Adrenal gland (tissue), 19 donors: ENCODE measurements at regions of chr12 and their contacts with region 1.

Region 1: DNA sequence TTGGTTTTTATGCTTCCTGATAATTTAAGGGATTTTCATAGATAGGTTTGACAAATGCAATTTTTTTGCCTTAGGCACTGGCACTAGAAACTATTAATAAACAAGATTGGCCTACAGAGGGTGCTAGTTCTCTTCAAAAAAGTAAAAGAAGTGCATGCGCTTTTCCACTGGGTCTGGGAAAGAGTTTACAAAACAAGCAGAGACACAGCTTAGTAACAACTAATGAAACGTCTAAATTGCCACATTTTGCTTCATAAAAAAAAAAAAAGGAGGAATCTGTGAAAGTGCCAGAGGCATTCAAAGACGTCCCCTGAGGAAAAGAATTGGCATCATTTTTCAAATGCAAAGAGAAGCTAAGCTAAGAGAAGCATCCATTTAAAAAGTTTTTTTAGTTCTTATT is 58.3 kb upstream of the EEA1 start:
- DNase-seq: peak in 6 of 7 donors; percentile 30 to 58 (median 44)
- H3K4me3 ChIP-seq: no peak overlapping the region
- H3K27ac ChIP-seq: peak overlapping the region; percentile 67 to 78 (median 72)
- H3K4me1 ChIP-seq: peaks cover 19 to 20% of the 10 kb centered on the region in 2 donors
- H3K27me3 ChIP-seq: no peaks in the 10 kb centered on the region
- CTCF ChIP-seq: peak; percentile 38 to 84 (median 74)
- POLR2A ChIP-seq: no peak

Region 2: DNA sequence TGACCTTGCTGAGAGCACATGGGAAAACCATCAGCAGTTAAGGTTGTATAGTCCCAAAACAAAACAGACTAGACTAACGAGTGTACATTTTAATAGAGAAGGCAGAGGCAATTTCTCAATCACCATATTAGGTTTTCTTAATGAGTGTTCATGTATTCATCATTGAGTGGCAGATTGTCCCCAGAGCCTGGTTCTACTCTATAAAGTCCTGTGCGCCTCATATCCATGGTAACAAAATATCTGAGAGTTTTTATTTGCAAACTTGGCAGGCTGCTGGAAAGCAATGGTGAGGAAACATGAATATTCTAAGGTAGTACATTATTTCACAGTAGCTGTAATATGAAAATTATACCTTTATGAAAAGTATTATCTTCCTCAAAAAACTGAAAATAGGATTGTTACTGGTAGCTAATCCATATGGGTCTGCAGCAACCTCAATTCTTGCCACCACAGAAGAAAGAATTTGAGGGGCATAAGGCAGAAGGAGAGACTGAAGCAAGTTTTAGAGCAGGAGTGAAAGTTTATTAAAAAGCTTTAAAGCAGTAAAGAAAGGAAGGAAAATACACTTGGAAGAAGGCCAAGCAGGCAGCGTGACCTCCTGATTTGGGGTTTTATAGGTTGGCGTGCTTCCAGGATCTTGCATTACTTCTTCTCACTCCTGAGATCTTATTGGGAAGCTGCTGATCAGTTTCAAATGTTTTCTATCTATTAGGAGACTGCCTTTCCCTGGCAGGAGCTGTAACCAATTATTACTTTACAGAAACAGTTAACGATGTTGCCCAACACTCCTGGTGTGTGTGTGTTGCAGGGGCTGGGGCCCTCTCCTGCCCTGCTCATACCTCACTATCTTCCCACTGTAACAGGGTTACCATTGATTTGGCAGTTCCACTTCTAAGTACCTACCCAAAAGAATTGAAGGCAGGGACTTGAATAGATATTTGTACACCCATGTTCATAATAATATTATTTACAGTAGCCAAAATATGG is 236.4 kb after region 1 on chr12:
- intact Hi-C with region 1: no loop called
- DNase-seq: peak in 2 of 7 donors; percentile 32 to 34
- H3K4me3 ChIP-seq: no peak overlapping the region
- H3K27ac ChIP-seq: no peak overlapping the region
- H3K4me1 ChIP-seq: no peaks in the 10 kb centered on the region
- H3K27me3 ChIP-seq: no peaks in the 10 kb centered on the region
- CTCF ChIP-seq: no peak
- POLR2A ChIP-seq: no peak

Region 3: DNA sequence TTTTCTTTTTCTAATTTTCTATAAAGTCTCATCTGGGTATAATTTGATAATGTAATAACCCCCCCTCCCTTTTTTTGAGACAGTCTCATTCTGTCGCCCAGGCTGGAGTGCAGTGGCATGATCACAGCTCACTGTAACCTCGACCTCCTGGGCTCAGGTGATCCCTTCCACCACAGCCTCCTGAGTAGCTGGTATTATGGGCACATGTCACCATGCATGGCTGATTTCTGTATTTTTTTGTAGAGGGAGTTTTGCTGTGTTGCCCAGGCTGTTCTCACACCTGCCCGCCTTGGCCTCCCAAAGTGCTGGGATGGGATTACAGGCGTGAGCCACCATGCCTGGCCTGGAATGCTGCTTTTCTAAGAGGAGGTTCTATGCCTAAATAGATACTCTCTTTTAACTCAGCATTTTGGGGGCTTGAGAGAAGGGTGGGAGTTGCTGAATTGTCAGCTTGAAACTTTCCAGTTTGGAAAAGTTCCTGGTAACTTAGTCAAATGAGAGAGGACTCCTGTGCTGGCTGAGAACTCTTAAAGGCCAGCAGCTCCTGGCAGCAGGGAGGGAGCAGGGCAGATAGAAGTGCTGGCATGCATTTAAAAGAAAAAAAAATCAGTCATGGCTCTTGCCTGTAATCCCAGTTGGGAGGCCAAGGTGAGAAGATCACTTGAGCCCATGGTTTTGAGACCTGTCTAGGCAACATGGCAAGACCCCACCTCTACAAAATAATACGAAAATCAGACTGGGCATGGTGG is 403.4 kb after region 1 on chr12:
- intact Hi-C with region 1: loop called (anchors 5 to 10 kb)
- DNase-seq: peak in 3 of 7 donors; percentile 34 to 43 (median 36)
- H3K4me3 ChIP-seq: no peak overlapping the region
- H3K27ac ChIP-seq: peak overlapping the region; percentile 35 to 79 (median 51)
- H3K4me1 ChIP-seq: peaks cover 52 to 68% of the 10 kb centered on the region in 2 donors
- H3K27me3 ChIP-seq: no peaks in the 10 kb centered on the region
- CTCF ChIP-seq: no peak
- POLR2A ChIP-seq: no peak

Region 4: GRCh38 chr12:93397412-93397811 is 410.1 kb after region 1 on chr12:
- intact Hi-C with region 1: loop called (anchors 5 to 10 kb)
- DNase-seq: peak in 1 of 7 donors; percentile 54
- H3K4me3 ChIP-seq: no peak overlapping the region
- H3K27ac ChIP-seq: no peak overlapping the region
- H3K4me1 ChIP-seq: peaks cover 0 to 15% of the 10 kb centered on the region in 2 donors
- H3K27me3 ChIP-seq: no peaks in the 10 kb centered on the region
- CTCF ChIP-seq: no peak
- POLR2A ChIP-seq: no peak